WTC11 (cell line): ENCODE measurements at regions of chr4 and their contacts with region 1.

Region 1: GRCh38 chr4:146095091-146095690 is 80.3 kb upstream of the LSM6 start:
- DNase-seq: peak; percentile 37
- ATAC-seq: peak; percentile 59
- H3K4me3 Mint-ChIP-seq: no peak overlapping the region
- H3K27ac Mint-ChIP-seq: no peak overlapping the region
- H3K4me1 Mint-ChIP-seq: no peaks in the 10 kb centered on the region
- H3K27me3 Mint-ChIP-seq: no peaks in the 10 kb centered on the region
- CTCF ChIP-seq: peak; percentile 77

Region 2: DNA sequence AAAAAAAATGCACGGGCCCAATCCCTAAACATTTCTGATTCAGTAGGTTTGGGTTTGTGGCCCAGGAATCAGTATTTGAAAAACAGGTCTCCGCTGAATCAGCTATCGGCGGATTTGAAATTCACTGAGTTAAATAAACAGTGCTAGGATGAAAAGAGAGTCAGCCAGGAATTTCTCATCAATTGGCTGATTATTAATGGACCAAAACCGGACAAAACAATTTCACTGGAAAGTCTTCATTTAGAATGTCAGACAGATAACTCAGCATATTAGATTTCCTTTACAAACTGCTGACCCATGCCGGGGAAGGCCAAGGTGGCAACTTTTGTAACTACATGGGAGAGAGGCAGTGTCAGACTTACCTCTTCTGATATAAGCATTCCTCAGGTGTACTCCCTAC is 19.1 kb before region 1 on chr4:
- CTCF ChIA-PET with region 1: interaction called, 34 read pairs
- POLR2A ChIA-PET with region 1: no interaction called
- DNase-seq: no peak
- ATAC-seq: no peak
- H3K4me3 Mint-ChIP-seq: no peak overlapping the region
- H3K27ac Mint-ChIP-seq: no peak overlapping the region
- H3K4me1 Mint-ChIP-seq: no peaks in the 10 kb centered on the region
- H3K27me3 Mint-ChIP-seq: no peaks in the 10 kb centered on the region; the same call in 1 of the 2 replicates
- CTCF ChIP-seq: no peak

Region 3: GRCh38 chr4:146105464-146105863 is 10.3 kb after region 1 on chr4:
- CTCF ChIA-PET with region 1: interaction called, 26 read pairs
- POLR2A ChIA-PET with region 1: no interaction called
- DNase-seq: no peak
- ATAC-seq: no peak
- H3K4me3 Mint-ChIP-seq: no peak overlapping the region
- H3K27ac Mint-ChIP-seq: no peak overlapping the region
- H3K4me1 Mint-ChIP-seq: 0 out of 2 replicates have a peak, but pooled peaks cover 2% of the 10 kb centered on the region
- H3K27me3 Mint-ChIP-seq: no peaks in the 10 kb centered on the region
- CTCF ChIP-seq: no peak

Region 4: GRCh38 chr4:146110871-146111485 is 15.8 kb after region 1 on chr4:
- CTCF ChIA-PET with region 1: interaction called, 26 read pairs
- POLR2A ChIA-PET with region 1: no interaction called
- DNase-seq: no peak
- ATAC-seq: no peak
- H3K4me3 Mint-ChIP-seq: no peak overlapping the region
- H3K27ac Mint-ChIP-seq: no peak overlapping the region
- H3K4me1 Mint-ChIP-seq: no peaks in the 10 kb centered on the region
- H3K27me3 Mint-ChIP-seq: no peaks in the 10 kb centered on the region; the same call in 1 of the 2 replicates
- CTCF ChIP-seq: no peak

Region 5: DNA sequence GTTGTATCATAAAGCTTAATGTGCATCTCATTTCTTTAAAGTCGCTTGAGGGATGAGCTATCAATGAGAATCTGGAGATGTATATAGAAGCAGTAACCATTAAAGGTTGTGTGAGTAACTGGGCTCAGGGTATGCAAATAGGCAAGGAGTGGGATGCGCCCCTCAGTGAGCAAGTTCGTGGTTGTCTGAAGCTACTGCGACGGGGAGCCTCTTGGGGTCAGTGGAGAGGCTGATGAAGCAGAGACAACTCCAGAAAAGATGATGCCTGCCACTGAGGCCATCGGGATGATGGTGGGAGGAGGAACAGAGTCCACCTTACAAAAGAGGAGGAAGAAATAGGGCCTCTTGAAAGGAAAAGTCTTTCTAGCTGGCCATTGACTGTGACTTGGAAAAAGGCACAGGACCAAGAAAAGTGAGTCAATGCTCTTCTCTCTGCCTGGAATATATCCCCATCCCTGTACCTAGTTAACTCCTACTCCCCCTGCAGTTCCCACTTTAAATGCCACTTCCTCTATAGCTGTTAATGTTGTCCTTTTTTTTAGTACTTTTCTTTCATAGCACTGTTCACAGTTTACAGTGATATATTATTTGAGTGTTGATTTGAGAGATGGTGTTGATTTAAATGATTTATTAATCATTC is 29.0 kb after region 1 on chr4:
- CTCF ChIA-PET with region 1: interaction called, 16 read pairs
- POLR2A ChIA-PET with region 1: no interaction called
- DNase-seq: peak; percentile 54
- ATAC-seq: peak; percentile 99
- H3K4me3 Mint-ChIP-seq: no peak overlapping the region
- H3K27ac Mint-ChIP-seq: no peak overlapping the region
- H3K4me1 Mint-ChIP-seq: peaks cover 7% of the 10 kb centered on the region
- H3K27me3 Mint-ChIP-seq: no peaks in the 10 kb centered on the region
- CTCF ChIP-seq: no peak

Region 6: GRCh38 chr4:146134761-146135445 is 39.7 kb after region 1 on chr4:
- CTCF ChIA-PET with region 1: no interaction called
- POLR2A ChIA-PET with region 1: no interaction called
- DNase-seq: no peak
- ATAC-seq: peak; percentile 36
- H3K4me3 Mint-ChIP-seq: no peak overlapping the region
- H3K27ac Mint-ChIP-seq: no peak overlapping the region
- H3K4me1 Mint-ChIP-seq: peaks cover 11% of the 10 kb centered on the region
- H3K27me3 Mint-ChIP-seq: no peaks in the 10 kb centered on the region; the same call in 1 of the 2 replicates
- CTCF ChIP-seq: no peak

Region 7: DNA sequence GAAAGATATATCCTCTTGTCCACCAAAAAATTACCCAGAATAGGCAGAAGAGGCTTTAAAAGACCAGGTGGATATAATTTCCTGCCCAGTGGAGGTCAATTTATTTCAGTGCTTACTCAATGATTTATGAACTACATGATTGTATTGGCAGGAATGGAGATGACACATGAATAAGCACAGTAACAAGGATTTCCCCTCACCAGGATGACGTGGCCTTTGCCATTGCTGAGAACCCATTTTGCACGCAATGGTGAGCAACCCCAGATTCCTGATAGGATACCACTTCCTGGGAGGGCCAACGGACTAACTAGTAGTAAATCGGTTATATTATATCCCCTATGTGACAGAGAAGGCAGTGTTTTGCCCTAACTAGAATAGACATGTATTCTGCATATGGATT is 862.0 kb after region 1 on chr4:
- CTCF ChIA-PET with region 1: no interaction called
- POLR2A ChIA-PET with region 1: no interaction called
- DNase-seq: no peak
- ATAC-seq: no peak
- H3K4me3 Mint-ChIP-seq: no peak overlapping the region
- H3K27ac Mint-ChIP-seq: no peak overlapping the region
- H3K4me1 Mint-ChIP-seq: no peaks in the 10 kb centered on the region
- H3K27me3 Mint-ChIP-seq: no peaks in the 10 kb centered on the region; the same call in 1 of the 2 replicates
- CTCF ChIP-seq: no peak